ENCODE measurements at regions of chr9 and their contacts with region 1.

Region 1: DNA sequence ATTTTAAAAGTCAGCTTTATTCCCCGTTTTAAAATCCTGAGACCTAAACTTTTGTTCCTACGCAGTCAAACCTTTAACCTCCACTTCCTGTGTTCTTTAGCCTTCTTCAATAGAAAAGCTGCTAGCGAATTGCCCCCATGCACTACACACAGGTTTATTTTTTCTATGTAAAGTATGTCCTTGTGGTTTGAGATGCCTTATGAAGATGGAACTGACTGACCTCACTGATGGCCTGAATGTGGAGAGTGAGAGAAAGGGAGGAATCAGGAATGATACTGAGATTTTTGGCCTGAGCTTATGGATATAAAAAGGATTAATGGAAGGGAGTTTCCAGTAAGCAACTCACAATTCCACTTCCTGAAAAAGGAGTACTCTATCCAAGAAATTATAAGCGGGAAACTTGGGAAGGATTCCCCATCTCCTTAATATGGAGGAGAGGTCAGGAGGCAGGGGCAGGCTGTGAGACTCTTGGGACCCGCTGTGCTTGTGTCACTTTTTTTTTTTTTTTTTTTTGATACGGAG is 89.5 kb downstream of the UGCG start:
- DNase-seq: no peak
- ATAC-seq: peak; percentile 32
- H3K4me3 Mint-ChIP-seq: no peak overlapping the region
- H3K27ac Mint-ChIP-seq: peak overlapping the region; percentile 49
- H3K4me1 Mint-ChIP-seq: peaks cover 38% of the 10 kb centered on the region
- H3K27me3 Mint-ChIP-seq: no peaks in the 10 kb centered on the region
- CTCF ChIP-seq: no peak

Region 2: DNA sequence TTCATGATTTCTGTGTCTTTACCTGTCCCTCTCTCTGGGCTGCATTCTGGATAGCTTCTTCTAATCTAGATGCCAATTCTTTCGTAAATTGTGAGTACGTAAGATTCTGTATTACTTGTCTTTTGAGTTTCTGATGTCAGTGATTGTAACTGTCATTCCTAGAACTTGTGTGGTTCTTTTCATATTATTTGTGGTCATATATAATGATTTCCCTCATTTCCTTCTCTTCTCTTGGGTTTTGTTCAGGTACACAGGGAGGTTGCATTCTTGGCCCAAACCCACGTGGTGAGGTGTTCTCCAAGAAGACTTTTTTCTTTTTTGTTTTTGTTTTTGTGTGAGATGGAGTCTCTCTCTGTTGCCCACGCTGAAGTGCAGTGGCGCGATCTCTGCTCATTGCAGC is 75.7 kb before region 1 on chr9:
- CTCF ChIA-PET with region 1: interaction called, 3 read pairs
- POLR2A ChIA-PET with region 1: interaction called, 5 read pairs
- intact Hi-C with region 1: loop called (anchors 1 kb)
- DNase-seq: peak; percentile 41
- ATAC-seq: peak; percentile 25
- H3K4me3 Mint-ChIP-seq: peak overlapping the region; percentile 6
- H3K27ac Mint-ChIP-seq: peak overlapping the region; percentile 7
- H3K4me1 Mint-ChIP-seq: peaks cover 86% of the 10 kb centered on the region
- H3K27me3 Mint-ChIP-seq: no peaks in the 10 kb centered on the region
- CTCF ChIP-seq: no peak

Measured in activated CD8-positive, alpha-beta T cell treated with anti-CD3 and anti-CD28 coated beads for 36 hours (primary cell).